ENCODE measurements at regions of chr2 and their contacts with region 1.

Region 1: DNA sequence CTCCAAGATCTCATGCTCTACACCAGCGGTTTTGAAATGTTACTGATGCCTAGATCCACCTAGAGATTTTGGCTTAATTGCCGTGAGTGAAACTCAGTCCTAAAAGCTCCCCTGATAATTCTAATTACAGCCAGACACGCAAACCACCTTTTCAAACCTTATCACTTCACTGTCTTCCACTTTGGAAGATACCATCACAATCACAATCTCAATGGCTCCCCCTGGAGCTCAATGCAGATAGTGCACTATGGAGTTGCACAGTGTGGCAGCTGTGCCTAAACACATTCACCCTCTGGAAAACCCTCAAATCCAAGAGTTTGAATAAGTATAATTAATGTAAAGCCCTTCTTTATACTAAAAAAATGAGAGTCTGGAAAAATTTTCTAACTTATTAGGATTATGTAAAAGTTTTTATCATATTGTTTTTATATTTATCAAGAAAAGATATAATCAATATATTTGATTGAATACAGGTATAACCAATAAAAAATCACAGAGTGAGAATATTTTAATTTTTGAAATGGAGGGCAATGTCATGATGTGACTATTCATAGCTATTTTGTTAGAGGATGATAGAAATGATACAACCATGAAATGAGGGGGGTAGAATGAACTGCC is 102.9 kb upstream of the SLC8A1 start:
- DNase-seq: peak; percentile 65 to 75
- H3K4me3 ChIP-seq: no peak overlapping the region
- H3K4me3 Mint-ChIP-seq: no peak overlapping the region
- H3K27ac Mint-ChIP-seq: no peak overlapping the region
- H3K4me1 ChIP-seq: no peaks in the 10 kb centered on the region
- H3K4me1 Mint-ChIP-seq: no peaks in the 10 kb centered on the region
- H3K27me3 ChIP-seq: no peaks in the 10 kb centered on the region
- H3K27me3 Mint-ChIP-seq: peaks cover 9% of the 10 kb centered on the region
- CTCF ChIP-seq: peak; percentile 89

Region 2: GRCh38 chr2:40244675-40245074 is 310.1 kb before region 1 on chr2:
- CTCF ChIA-PET with region 1: interaction called, 3 read pairs
- POLR2A ChIA-PET with region 1: no interaction called
- intact Hi-C with region 1: loop called (anchors 1 kb)
- DNase-seq: peak; percentile 69 to 79
- H3K4me3 ChIP-seq: no peak overlapping the region
- H3K4me3 Mint-ChIP-seq: no peak overlapping the region
- H3K27ac Mint-ChIP-seq: no peak overlapping the region
- H3K4me1 ChIP-seq: peaks cover 10% of the 10 kb centered on the region
- H3K4me1 Mint-ChIP-seq: peaks cover 13% of the 10 kb centered on the region
- H3K27me3 ChIP-seq: no peaks in the 10 kb centered on the region
- H3K27me3 Mint-ChIP-seq: no peaks in the 10 kb centered on the region
- CTCF ChIP-seq: peak; percentile 40 to 70

Region 3: GRCh38 chr2:40448468-40449079 is 106.2 kb before region 1 on chr2:
- CTCF ChIA-PET with region 1: no interaction called
- POLR2A ChIA-PET with region 1: no interaction called
- intact Hi-C with region 1: loop called (anchors 1 kb)
- DNase-seq: peak in 1 of 2 experiments; percentile 37
- H3K4me3 ChIP-seq: no peak overlapping the region
- H3K4me3 Mint-ChIP-seq: no peak overlapping the region
- H3K27ac Mint-ChIP-seq: no peak overlapping the region
- H3K4me1 ChIP-seq: no peaks in the 10 kb centered on the region
- H3K4me1 Mint-ChIP-seq: no peaks in the 10 kb centered on the region
- H3K27me3 ChIP-seq: no peaks in the 10 kb centered on the region
- H3K27me3 Mint-ChIP-seq: peaks cover 14% of the 10 kb centered on the region
- CTCF ChIP-seq: peak in 1 of 2 experiments; percentile 51

Region 4: GRCh38 chr2:40700223-40700924 is 145.6 kb after region 1 on chr2:
- CTCF ChIA-PET with region 1: no interaction called
- POLR2A ChIA-PET with region 1: no interaction called
- intact Hi-C with region 1: no loop called
- DNase-seq: no peak
- H3K4me3 ChIP-seq: no peak overlapping the region
- H3K4me3 Mint-ChIP-seq: no peak overlapping the region
- H3K27ac Mint-ChIP-seq: no peak overlapping the region
- H3K4me1 ChIP-seq: peaks cover 4% of the 10 kb centered on the region; the same call in 1 of the 2 replicates
- H3K4me1 Mint-ChIP-seq: no peaks in the 10 kb centered on the region
- H3K27me3 ChIP-seq: no peaks in the 10 kb centered on the region
- H3K27me3 Mint-ChIP-seq: no peaks in the 10 kb centered on the region
- CTCF ChIP-seq: no peak

Region 5: DNA sequence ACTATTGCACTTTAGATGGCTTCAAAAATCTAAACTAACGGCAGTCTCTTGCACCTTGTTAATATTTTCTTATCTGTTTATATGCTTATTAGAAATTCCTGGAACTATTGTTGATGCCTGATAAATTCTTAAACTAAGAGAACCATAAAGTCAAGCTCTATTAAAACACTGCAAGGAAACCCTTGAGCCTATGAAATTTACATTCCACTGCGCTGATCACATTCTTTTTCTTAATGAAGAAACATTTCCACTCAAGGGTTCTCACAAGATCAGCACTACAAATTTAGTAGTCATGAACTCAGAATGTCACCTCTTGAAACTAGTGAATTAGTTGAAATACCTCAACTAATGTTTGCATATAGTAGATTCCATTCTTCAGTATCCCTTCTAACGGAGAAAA is 228.9 kb after region 1 on chr2:
- CTCF ChIA-PET with region 1: no interaction called
- POLR2A ChIA-PET with region 1: no interaction called
- intact Hi-C with region 1: no loop called
- DNase-seq: no peak
- H3K4me3 ChIP-seq: no peak overlapping the region
- H3K4me3 Mint-ChIP-seq: no peak overlapping the region
- H3K27ac Mint-ChIP-seq: no peak overlapping the region
- H3K4me1 ChIP-seq: no peaks in the 10 kb centered on the region
- H3K4me1 Mint-ChIP-seq: no peaks in the 10 kb centered on the region
- H3K27me3 ChIP-seq: no peaks in the 10 kb centered on the region
- H3K27me3 Mint-ChIP-seq: no peaks in the 10 kb centered on the region
- CTCF ChIP-seq: no peak